ENCODE measurements at regions of chr10 and their contacts with region 1.

Region 1: DNA sequence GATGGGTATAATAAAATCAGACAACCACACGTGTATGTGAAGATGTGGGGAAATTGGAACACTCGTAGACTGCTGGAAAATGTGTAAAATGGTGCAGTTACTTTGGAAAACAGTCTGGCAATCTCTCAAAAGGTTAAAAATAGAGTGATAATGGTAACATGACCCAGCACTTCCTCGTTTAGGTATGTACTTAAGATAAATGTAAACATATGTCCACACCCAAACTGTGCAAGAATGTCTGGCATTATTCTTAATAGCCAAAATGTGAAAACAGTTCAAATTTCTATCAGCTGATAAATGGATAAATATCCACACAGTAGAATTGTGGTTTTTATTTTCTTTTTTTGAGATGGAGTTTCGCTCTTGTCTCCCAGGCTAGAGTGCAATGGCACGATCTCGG is 272.8 kb downstream of the ZNF248 start:
- DNase-seq: no peak
- H3K4me3 ChIP-seq: no peak overlapping the region
- H3K27ac ChIP-seq: no peak overlapping the region
- H3K4me1 ChIP-seq: no peaks in the 10 kb centered on the region
- H3K27me3 ChIP-seq: peaks cover 7% of the 10 kb centered on the region; the same call in 1 of the 2 replicates
- CTCF ChIP-seq: no peak

Region 2: GRCh38 chr10:36393801-36394200 is 1190.9 kb before region 1 on chr10:
- CTCF ChIA-PET with region 1: no interaction called
- POLR2A ChIA-PET with region 1: no interaction called
- intact Hi-C with region 1: loop called (anchors 10 kb)
- DNase-seq: no peak
- H3K4me3 ChIP-seq: no peak overlapping the region
- H3K27ac ChIP-seq: no peak overlapping the region
- H3K4me1 ChIP-seq: no peaks in the 10 kb centered on the region
- H3K27me3 ChIP-seq: no peaks in the 10 kb centered on the region
- CTCF ChIP-seq: no peak

Region 3: DNA sequence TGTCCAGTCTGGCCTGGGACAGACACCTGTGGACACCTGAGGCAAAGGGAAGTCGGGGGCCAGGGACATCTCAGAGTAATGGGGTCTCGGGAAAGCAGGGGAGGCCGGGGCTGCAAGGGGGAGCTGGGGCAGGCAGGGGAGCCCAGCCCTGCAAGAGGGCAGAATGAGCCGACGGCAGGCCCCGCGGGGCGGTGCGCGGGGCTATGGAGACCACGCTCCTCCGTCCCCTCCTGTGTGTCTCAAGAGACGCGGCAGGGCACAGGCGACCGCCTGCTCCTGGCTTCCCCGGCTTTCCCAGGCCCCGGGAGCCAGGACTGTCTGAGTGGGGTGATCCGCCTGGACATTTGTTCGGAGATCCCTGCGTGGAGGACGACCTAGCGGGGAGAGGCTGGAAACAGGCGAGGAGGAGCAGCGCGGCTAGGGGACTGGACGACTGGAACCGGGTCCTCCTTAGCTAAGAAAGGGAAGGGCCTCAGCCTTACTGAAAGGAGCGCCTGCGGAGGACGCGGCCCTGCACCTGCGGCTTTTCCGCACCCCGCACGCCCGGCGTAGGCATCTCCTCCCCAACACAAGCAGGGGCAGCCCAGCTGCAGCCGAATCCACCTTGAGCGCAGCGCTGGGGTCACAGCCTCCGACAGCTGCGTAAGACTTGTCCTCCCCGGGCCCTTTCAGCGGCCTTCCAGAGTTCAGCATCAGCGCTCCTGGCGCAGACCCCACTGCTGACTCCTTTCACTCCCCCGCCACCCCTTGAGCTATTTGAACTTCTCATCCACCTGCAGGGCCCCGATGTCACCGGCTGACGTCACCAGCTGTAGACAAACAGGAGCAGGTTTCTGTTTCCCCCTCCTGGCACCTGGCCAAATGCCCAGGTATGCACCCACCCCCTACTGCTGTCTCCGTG is 96.3 kb after region 1 on chr10:
- CTCF ChIA-PET with region 1: no interaction called
- POLR2A ChIA-PET with region 1: no interaction called
- intact Hi-C with region 1: no loop called
- DNase-seq: no peak
- H3K4me3 ChIP-seq: no peak overlapping the region
- H3K27ac ChIP-seq: no peak overlapping the region
- H3K4me1 ChIP-seq: no peaks in the 10 kb centered on the region
- H3K27me3 ChIP-seq: no peaks in the 10 kb centered on the region
- CTCF ChIP-seq: no peak